GM12878 (cell line): ENCODE measurements at regions of chr12 and their contacts with region 1.

Region 1: GRCh38 chr12:80178846-80179245 is 79.5 kb downstream of the OTOGL start:
- DNase-seq: peak; percentile 30
- ATAC-seq: peak; percentile 93
- H3K4me3 ChIP-seq: peak overlapping the region; percentile 7; the same call in 1 of the 2 replicates
- H3K27ac ChIP-seq: no peak overlapping the region
- H3K4me1 ChIP-seq: peaks cover 17% of the 10 kb centered on the region
- H3K27me3 ChIP-seq: no peaks in the 10 kb centered on the region
- CTCF ChIP-seq: no peak
- EP300 ChIP-seq: no peak
- POLR2A ChIP-seq: no peak
- RAD21 ChIP-seq: no peak

Region 2: DNA sequence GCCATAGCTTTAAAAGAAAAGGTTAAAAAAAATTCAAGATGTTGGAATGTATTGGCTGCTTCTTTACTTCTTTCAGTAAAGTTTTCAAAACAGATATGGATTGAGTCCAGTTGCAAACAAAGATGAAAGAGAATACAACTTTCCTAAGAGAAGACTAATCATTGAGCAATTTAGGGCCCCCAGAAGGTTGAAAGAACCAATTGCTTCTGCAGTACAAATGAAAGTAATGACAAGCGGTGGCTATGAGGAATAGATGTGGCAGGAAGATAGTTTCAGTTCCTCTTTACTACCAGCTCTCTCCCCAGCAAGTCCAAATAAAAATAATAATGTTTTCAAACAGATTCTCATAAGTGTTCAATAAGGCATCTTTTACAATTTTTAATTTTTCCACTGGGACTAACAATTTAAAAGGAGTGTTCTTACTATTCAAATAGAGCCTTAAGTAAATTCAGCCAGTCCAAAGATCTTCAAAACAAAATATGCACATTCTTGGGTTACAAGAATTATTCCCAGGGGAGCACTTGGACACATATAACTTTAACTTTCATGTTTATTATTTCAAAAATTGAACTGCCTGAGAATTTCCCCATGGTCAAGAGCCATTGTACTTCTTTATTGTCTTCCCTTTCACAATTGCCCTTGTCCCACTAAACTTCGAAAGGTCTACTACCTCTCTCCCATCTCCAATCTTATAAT is 181.6 kb before region 1 on chr12:
- CTCF ChIA-PET with region 1: no interaction called
- POLR2A ChIA-PET with region 1: no interaction called
- RAD21 ChIA-PET with region 1: no interaction called
- SMC1A ChIA-PET with region 1: interaction called, 4 read pairs
- in situ Hi-C with region 1: no loop called
- intact Hi-C with region 1: loop called (anchors 5 kb)
- DNase-seq: peak; percentile 45
- ATAC-seq: peak; percentile 99
- H3K4me3 ChIP-seq: no peak overlapping the region
- H3K27ac ChIP-seq: no peak overlapping the region
- H3K4me1 ChIP-seq: no peaks in the 10 kb centered on the region
- H3K27me3 ChIP-seq: no peaks in the 10 kb centered on the region
- CTCF ChIP-seq: no peak
- EP300 ChIP-seq: peak in 1 of 2 experiments; percentile 77; a peak in 1 of 4 replicates
- POLR2A ChIP-seq: no peak
- RAD21 ChIP-seq: no peak

Region 3: GRCh38 chr12:80320121-80320678 is 141.4 kb after region 1 on chr12:
- CTCF ChIA-PET with region 1: no interaction called
- POLR2A ChIA-PET with region 1: interaction called, 13 read pairs
- RAD21 ChIA-PET with region 1: no interaction called
- SMC1A ChIA-PET with region 1: no interaction called
- in situ Hi-C with region 1: no loop called
- intact Hi-C with region 1: no loop called
- DNase-seq: no peak
- ATAC-seq: no peak
- H3K4me3 ChIP-seq: no peak overlapping the region
- H3K27ac ChIP-seq: no peak overlapping the region
- H3K4me1 ChIP-seq: no peaks in the 10 kb centered on the region
- H3K27me3 ChIP-seq: no peaks in the 10 kb centered on the region
- CTCF ChIP-seq: no peak
- EP300 ChIP-seq: no peak
- POLR2A ChIP-seq: no peak
- RAD21 ChIP-seq: no peak